Naive thymus-derived CD4-positive, alpha-beta T cell (primary cell): ENCODE measurements at regions of chr11 and their contacts with region 1.

Region 1: GRCh38 chr11:121328967-121329679 is 36.6 kb downstream of the SC5D start:
- DNase-seq: peak in 4 of 9 donors; percentile 5 to 18 (median 8)
- ATAC-seq: peak; percentile 54
- H3K4me3 ChIP-seq: no peak overlapping the region
- H3K4me3 Mint-ChIP-seq: no peak overlapping the region
- H3K27ac ChIP-seq: no peak overlapping the region
- H3K27ac Mint-ChIP-seq: no peak overlapping the region
- H3K4me1 ChIP-seq: peaks cover 19 to 26% of the 10 kb centered on the region in 2 donors
- H3K4me1 Mint-ChIP-seq: peaks cover 3 to 20% (median 9%) of the 10 kb centered on the region in 7 donors
- H3K27me3 ChIP-seq: no peaks in the 10 kb centered on the region
- H3K27me3 Mint-ChIP-seq: peaks cover 0 to 2% (median 0%) of the 10 kb centered on the region in 5 donors

Region 2: DNA sequence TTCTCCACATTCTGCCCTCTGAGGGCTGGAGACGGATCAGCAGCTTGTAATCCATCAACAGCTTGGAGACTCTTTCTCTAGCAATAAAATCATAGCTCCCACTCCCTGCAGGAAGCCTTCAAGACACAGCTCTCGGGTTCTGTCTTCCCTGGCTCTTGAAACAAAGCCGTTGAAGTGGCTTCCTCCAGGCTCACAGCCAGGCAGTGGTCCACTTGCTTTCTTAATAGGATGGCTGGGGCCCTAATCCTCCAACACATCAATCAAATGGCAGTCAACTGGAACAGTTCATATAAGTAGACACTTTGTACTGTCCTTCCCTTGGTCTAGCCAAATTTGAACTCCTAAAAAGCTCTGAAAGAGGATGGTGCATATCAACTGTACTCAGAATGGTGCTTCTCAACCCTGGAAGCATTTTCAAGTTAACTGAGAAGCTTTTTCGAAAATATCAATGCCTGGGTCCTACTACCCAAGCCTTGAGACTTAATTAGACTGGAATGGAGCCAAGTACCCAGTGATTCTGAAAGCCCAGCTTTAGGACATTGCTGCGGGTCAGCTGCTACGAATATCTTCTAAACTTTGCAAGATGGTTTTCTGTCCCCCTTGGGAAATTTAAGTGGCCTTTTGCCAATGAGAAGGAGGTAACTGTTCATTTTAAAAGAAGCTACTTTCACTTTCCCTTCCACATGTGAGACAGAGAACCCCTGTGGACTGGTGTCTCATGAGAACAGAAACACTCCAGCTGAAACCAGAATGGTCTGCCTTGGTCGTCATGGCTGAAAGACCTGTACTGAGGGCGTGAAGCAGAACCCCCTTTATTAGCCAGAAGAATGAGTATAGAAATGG is 38.1 kb after region 1 on chr11:
- CTCF ChIA-PET with region 1: interaction called, 7 read pairs
- POLR2A ChIA-PET with region 1: interaction called, 8 read pairs
- intact Hi-C with region 1: loop called in 1 of 2 experiments (anchors 2 kb)
- DNase-seq: peak in 7 of 9 donors; percentile 40 to 65 (median 58)
- ATAC-seq: peak; percentile 74
- H3K4me3 ChIP-seq: peak overlapping the region; percentile 53
- H3K4me3 Mint-ChIP-seq: peak overlapping the region; percentile 68 to 94 (median 83)
- H3K27ac ChIP-seq: peak overlapping the region; percentile 55
- H3K27ac Mint-ChIP-seq: peak overlapping the region; percentile 76 to 98 (median 94)
- H3K4me1 ChIP-seq: peaks cover 15 to 33% of the 10 kb centered on the region in 2 donors
- H3K4me1 Mint-ChIP-seq: peaks cover 35 to 59% (median 45%) of the 10 kb centered on the region in 7 donors
- H3K27me3 ChIP-seq: no peaks in the 10 kb centered on the region
- H3K27me3 Mint-ChIP-seq: no peaks in the 10 kb centered on the region

Region 3: DNA sequence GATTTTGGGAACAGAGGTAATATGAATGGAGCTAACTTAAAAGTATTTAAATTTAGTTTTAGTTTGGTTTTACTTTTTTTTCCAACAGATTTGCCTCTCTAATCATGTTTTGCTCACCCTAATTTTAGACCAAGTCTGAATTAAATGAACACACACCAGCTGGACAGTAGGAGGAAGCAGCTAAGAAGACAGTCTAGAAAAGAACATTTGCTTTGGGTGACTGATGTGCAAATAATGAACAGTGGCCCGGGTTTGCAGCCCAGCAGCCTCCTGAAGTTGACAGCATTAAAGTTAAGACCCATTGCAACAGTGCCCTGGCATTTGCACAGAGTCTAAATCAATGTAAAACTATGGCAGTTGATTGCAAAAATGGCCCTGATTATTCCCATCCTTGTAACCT is 56.6 kb after region 1 on chr11:
- CTCF ChIA-PET with region 1: no interaction called
- POLR2A ChIA-PET with region 1: no interaction called
- intact Hi-C with region 1: no loop called
- DNase-seq: no peak
- ATAC-seq: no peak
- H3K4me3 ChIP-seq: no peak overlapping the region
- H3K4me3 Mint-ChIP-seq: no peak overlapping the region
- H3K27ac ChIP-seq: no peak overlapping the region
- H3K27ac Mint-ChIP-seq: no peak overlapping the region
- H3K4me1 ChIP-seq: no peaks in the 10 kb centered on the region
- H3K4me1 Mint-ChIP-seq: peaks cover 2 to 17% (median 10%) of the 10 kb centered on the region in 7 donors
- H3K27me3 ChIP-seq: no peaks in the 10 kb centered on the region
- H3K27me3 Mint-ChIP-seq: no peaks in the 10 kb centered on the region

Region 4: GRCh38 chr11:121426476-121427399 is 97.6 kb after region 1 on chr11:
- CTCF ChIA-PET with region 1: no interaction called
- POLR2A ChIA-PET with region 1: interaction called, 3 read pairs
- intact Hi-C with region 1: loop called in 1 of 2 experiments (anchors 2 kb)
- DNase-seq: peak in 6 of 9 donors; percentile 30 to 56 (median 36)
- ATAC-seq: peak; percentile 79
- H3K4me3 ChIP-seq: peak overlapping the region; percentile 44
- H3K4me3 Mint-ChIP-seq: peak overlapping the region; percentile 67 to 86 (median 78)
- H3K27ac ChIP-seq: peak overlapping the region; percentile 37
- H3K27ac Mint-ChIP-seq: peak overlapping the region; percentile 5 to 89 (median 43)
- H3K4me1 ChIP-seq: peaks cover 0 to 27% of the 10 kb centered on the region in 2 donors
- H3K4me1 Mint-ChIP-seq: peaks cover 34 to 70% (median 54%) of the 10 kb centered on the region in 7 donors
- H3K27me3 ChIP-seq: no peaks in the 10 kb centered on the region
- H3K27me3 Mint-ChIP-seq: peaks cover 0 to 3% (median 0%) of the 10 kb centered on the region in 5 donors